Mucosa of descending colon (tissue), 3 donors: ENCODE measurements at regions of chr4 and their contacts with region 1.

Region 1: DNA sequence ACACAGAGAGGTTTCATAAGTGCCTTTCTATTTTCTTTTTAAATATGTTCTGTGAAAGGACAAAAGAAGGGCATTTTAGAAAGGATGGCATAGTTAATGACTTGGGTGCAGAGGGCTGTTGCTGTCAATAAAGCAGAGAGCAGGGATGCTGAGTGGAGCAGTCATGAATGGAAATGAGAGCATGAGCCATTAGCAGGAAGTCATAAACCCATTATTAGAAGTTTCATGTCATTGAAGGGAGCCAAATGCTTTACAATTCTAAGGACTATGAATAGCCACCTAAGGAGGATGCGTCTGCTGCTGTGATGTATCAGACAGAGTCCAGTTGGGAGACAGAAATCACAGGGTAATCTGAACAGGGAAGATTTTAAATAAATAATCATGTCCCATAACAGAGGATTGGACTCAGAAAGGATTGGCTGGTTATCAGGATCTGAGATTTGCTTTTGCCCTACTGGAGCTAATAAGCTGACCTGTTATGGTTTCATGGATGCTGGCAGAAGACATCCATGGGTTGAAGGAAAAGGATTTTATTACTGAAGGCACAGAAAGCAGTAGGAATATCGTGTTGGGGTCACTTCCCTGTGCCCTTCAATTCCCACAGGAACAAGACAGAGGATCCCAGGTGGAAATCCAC is 47.5 kb upstream of the WDR19 start:
- DNase-seq: no peak
- ATAC-seq: no peak
- H3K4me3 ChIP-seq: no peak overlapping the region
- H3K4me1 ChIP-seq: peaks cover under 1% of the 10 kb centered on the region
- CTCF ChIP-seq: no peak

Region 2: DNA sequence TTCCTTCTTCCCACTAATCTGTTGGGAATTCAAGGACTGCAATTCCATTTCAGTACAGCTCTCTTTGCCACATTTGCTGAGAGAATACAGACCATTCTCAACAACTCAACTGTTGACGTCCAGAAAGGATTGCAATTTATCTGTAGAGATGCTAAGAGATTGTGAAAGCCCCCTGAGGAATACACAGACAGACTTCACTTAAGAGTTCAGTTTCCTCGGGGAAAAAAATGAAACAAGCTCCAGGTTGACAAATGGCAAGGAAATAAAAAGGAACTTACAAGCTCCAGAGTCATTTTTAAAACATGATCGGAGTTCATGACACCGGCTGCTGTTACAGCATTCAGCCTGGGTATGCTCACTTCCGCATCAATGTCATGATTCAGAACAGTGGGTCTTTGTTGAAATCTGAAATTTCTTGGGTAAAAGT is 365.8 kb before region 1 on chr4:
- intact Hi-C with region 1: loop called in 1 of 2 experiments (anchors 10 kb)
- DNase-seq: no peak
- ATAC-seq: no peak
- H3K4me3 ChIP-seq: no peak overlapping the region
- H3K4me1 ChIP-seq: no peaks in the 10 kb centered on the region
- CTCF ChIP-seq: no peak

Region 3: DNA sequence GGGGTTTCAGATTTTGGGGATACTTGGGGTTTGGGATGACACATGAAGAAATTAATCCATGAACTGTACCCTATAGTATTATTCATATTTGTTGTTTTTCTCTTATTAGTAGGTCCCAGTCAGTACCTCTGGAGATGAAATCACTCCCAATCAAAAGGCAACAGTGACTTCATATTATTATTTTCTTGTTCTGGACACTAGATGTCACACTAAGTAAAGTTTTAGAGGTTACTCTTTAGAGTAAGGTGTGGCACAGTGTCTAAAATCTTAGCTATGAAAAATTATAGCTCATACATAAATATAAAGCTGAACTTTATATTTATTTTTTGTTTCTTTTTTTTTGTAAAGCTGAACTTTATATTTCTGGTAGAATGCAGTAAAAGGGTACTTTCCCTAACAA is 232.1 kb before region 1 on chr4:
- intact Hi-C with region 1: loop called (anchors 10 kb)
- DNase-seq: no peak
- ATAC-seq: peak; percentile 64
- H3K4me3 ChIP-seq: no peak overlapping the region
- H3K4me1 ChIP-seq: peaks cover 22% of the 10 kb centered on the region
- CTCF ChIP-seq: peak; percentile 6